Transverse colon (tissue), 4 donors: ENCODE measurements at regions of chr5 and their contacts with region 1.

Region 1: GRCh38 chr5:483434-484140 is 40.6 kb downstream of the EXOC3 start:
- DNase-seq: no peak
- H3K4me3 ChIP-seq: no peak overlapping the region
- H3K27ac ChIP-seq: no peak overlapping the region
- H3K4me1 ChIP-seq: no peaks in the 10 kb centered on the region
- H3K27me3 ChIP-seq: peaks cover 67% of the 10 kb centered on the region
- CTCF ChIP-seq: no peak
- EP300 ChIP-seq: no peak
- POLR2A ChIP-seq: no peak

Region 2: GRCh38 chr5:773517-774264 is 290.1 kb after region 1 on chr5:
- in situ Hi-C with region 1: no loop called
- intact Hi-C with region 1: no loop called
- DNase-seq: no peak
- H3K4me3 ChIP-seq: no peak overlapping the region
- H3K27ac ChIP-seq: no peak overlapping the region
- H3K4me1 ChIP-seq: peaks cover 0 to 3% (median 0%) of the 10 kb centered on the region in 4 donors
- H3K27me3 ChIP-seq: no peaks in the 10 kb centered on the region
- CTCF ChIP-seq: no peak
- EP300 ChIP-seq: no peak
- POLR2A ChIP-seq: no peak

Region 3: GRCh38 chr5:1792842-1793266 is 1309.3 kb after region 1 on chr5:
- in situ Hi-C with region 1: no loop called
- intact Hi-C with region 1: loop called (anchors 5 kb)
- DNase-seq: peak; percentile 62
- H3K4me3 ChIP-seq: no peak overlapping the region
- H3K27ac ChIP-seq: peak overlapping the region; percentile 32 to 69 (median 36)
- H3K4me1 ChIP-seq: peaks cover 0 to 4% (median 4%) of the 10 kb centered on the region in 4 donors
- H3K27me3 ChIP-seq: no peaks in the 10 kb centered on the region
- CTCF ChIP-seq: no peak
- EP300 ChIP-seq: no peak
- POLR2A ChIP-seq: no peak